ENCODE measurements at regions of chr9 and their contacts with region 1.

Region 1: DNA sequence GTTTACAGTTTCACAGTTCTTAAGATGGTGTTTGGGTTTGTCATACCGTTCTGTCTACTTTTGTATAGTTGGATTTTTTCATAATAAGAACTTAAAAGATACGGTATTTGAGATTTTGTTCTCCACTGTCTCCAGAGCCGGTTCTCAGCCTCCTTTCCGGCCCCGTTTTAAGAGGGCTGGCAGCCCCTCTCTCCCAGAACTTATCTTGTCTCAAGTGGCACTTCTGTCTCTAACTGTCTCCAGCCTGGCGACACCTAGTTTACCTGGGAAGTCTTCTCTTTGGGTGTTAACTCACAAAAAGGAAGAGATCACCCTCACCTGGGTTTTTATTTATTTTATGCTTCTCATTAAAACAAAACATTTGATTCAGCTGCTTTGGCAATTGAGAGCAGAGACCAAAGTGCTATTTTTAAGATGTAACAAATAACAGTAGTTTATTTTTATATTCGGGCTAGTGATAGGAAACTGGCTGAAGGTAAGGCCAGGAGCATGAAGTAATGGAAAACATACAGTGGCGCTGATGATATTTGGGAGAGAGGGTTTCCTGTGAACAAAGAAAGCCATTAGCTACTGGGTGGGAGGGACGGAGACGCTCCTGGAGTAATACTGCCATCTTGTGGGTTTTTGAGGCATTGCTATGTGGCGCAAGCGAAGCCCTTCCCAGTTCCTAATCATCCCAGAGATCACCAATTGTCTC is 48.3 kb downstream of the ACER2 start:
- DNase-seq: peak; percentile 32 to 84
- ATAC-seq: peak; percentile 88 to 99 (median 98)
- H3K4me3 ChIP-seq: no peak overlapping the region
- H3K4me3 Mint-ChIP-seq: no peak overlapping the region
- H3K27ac ChIP-seq: no peak overlapping the region
- H3K27ac Mint-ChIP-seq: no peak overlapping the region
- H3K4me1 ChIP-seq: peaks cover 5% of the 10 kb centered on the region
- H3K4me1 Mint-ChIP-seq: peaks cover 0 to 9% of the 10 kb centered on the region in 2 donors
- H3K27me3 ChIP-seq: no peaks in the 10 kb centered on the region
- H3K27me3 Mint-ChIP-seq: peaks cover 0 to 4% of the 10 kb centered on the region in 2 donors
- CTCF ChIP-seq: peak; percentile 98

Region 2: GRCh38 chr9:18255158-18255629 is 1202.0 kb before region 1 on chr9:
- intact Hi-C with region 1: loop called (anchors 1 kb)
- DNase-seq: peak; percentile 53 to 82
- ATAC-seq: peak; percentile 64 to 90 (median 84)
- H3K4me3 ChIP-seq: no peak overlapping the region
- H3K4me3 Mint-ChIP-seq: no peak overlapping the region
- H3K27ac ChIP-seq: no peak overlapping the region
- H3K27ac Mint-ChIP-seq: no peak overlapping the region
- H3K4me1 ChIP-seq: no peaks in the 10 kb centered on the region
- H3K4me1 Mint-ChIP-seq: no peaks in the 10 kb centered on the region
- H3K27me3 ChIP-seq: no peaks in the 10 kb centered on the region
- H3K27me3 Mint-ChIP-seq: peaks cover 0 to 3% of the 10 kb centered on the region in 2 donors
- CTCF ChIP-seq: peak; percentile 99

Region 3: GRCh38 chr9:19028835-19029451 is 428.2 kb before region 1 on chr9:
- intact Hi-C with region 1: loop called (anchors 1 kb)
- DNase-seq: peak in 1 of 2 donors; percentile 64
- ATAC-seq: peak in 2 of 3 donors; percentile 38 to 60
- H3K4me3 ChIP-seq: no peak overlapping the region
- H3K4me3 Mint-ChIP-seq: no peak overlapping the region
- H3K27ac ChIP-seq: no peak overlapping the region
- H3K27ac Mint-ChIP-seq: no peak overlapping the region
- H3K4me1 ChIP-seq: no peaks in the 10 kb centered on the region
- H3K4me1 Mint-ChIP-seq: peaks cover 0 to 4% of the 10 kb centered on the region in 2 donors
- H3K27me3 ChIP-seq: no peaks in the 10 kb centered on the region
- H3K27me3 Mint-ChIP-seq: peaks cover 11 to 20% of the 10 kb centered on the region in 2 donors
- CTCF ChIP-seq: peak; percentile 71

Region 4: DNA sequence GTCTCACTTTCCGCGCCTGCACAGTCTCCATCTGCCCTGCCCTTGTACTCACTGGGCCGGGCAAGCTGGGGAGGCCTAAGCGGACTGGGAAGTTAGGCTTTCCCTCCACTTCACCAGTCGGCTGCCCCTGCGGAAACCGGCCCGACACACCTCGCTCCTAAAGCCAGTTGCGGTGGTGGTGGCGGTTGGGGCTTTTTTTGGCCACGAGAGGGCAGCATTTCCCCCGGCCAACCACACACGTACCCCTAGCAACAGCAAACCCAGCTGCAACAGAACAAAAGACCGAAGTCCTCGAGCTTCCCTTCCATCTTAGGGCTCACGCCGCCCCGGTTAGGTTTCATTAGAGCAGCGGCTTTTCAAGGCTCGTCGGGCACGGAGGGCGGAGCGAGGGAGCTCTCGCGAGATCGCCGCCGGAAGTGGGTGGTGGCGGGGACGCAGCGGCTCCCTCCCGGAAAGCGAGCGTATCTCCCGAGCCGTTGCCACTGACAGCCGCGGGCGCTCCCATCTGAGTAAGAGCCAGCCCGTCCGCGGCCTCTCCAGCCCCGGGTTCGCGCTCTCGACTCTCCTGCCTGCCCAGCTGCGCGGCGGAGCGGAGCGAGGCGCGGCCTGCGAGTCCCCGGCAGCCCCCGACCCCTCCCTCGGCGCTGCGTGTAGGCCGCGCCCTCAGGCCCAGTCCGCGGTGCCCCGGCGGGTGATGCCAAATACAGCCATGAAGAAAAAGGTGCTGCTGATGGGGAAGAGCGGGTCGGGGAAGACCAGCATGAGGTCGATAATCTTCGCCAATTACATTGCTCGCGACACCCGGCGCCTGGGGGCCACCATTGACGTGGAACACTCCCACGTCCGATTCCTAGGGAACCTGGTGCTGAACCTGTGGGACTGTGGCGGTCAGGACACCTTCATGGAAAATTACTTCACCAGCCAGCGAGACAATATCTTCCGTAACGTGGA is 407.9 kb before region 1 on chr9 and contains the start of gene RRAGA:
- intact Hi-C with region 1: loop called (anchors 2 kb)
- DNase-seq: peak; percentile 94 to 97
- ATAC-seq: peak; percentile 92 to 96 (median 93)
- H3K4me3 ChIP-seq: peak within 1 kb of the TSS; percentile 77
- H3K4me3 Mint-ChIP-seq: peak within 1 kb of the TSS; percentile 94
- H3K27ac ChIP-seq: peak within 1 kb of the TSS; percentile 82
- H3K27ac Mint-ChIP-seq: peak within 1 kb of the TSS; percentile 95 to 96
- H3K4me1 ChIP-seq: peaks cover 20% of the 10 kb centered on the region
- H3K4me1 Mint-ChIP-seq: peaks cover 30 to 33% of the 10 kb centered on the region in 2 donors
- H3K27me3 ChIP-seq: no peaks in the 10 kb centered on the region
- H3K27me3 Mint-ChIP-seq: no peaks in the 10 kb centered on the region
- CTCF ChIP-seq: peak; percentile 69
- total RNA-seq, gene RRAGA: 39.0 to 43.9 (median 41.5) TPM

Region 5: DNA sequence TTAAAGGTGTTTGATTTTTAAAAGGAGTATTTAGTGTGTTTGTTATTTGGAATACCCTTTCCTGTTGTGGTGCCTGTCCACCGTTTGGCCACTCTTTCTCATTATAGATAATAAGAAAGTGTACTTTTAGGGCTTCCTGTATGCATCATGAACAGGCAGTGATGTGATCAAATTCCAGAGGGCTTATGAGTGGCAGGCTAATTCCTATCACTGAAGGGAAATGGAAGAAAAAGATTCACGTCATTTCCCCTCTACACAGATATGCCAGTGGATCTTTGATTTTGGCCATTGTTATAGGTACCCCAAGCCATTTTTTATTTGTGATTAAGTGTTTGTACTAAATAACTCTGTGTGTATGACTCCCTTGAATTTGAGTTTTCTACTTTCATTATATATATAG is 114.2 kb before region 1 on chr9:
- intact Hi-C with region 1: loop called (anchors 10 kb)
- DNase-seq: no peak
- ATAC-seq: no peak
- H3K4me3 ChIP-seq: no peak overlapping the region
- H3K4me3 Mint-ChIP-seq: no peak overlapping the region
- H3K27ac ChIP-seq: no peak overlapping the region
- H3K27ac Mint-ChIP-seq: no peak overlapping the region
- H3K4me1 ChIP-seq: no peaks in the 10 kb centered on the region
- H3K4me1 Mint-ChIP-seq: peaks cover 6 to 15% of the 10 kb centered on the region in 2 donors
- H3K27me3 ChIP-seq: no peaks in the 10 kb centered on the region
- H3K27me3 Mint-ChIP-seq: no peaks in the 10 kb centered on the region
- CTCF ChIP-seq: no peak

Region 6: DNA sequence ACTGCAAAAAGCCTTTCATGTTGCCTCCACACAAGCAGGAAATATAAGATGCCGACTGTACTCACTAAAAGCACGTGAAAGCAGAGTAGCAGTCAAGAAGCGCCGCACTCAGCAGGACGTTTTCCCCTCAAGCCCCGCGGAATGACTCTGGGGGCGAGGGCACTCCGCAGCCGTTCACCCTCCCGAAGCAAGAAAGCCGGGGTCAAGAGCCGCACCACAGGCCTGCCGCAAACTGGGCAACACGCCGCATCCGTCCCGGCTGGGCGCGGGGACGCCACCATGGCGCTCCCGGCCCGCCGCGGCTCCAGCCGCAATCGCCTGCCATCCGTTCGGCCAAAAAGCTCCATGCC is 77.5 kb before region 1 on chr9:
- intact Hi-C with region 1: loop called (anchors 5 kb)
- DNase-seq: peak in 1 of 2 donors; percentile 72
- ATAC-seq: peak; percentile 41 to 58 (median 50)
- H3K4me3 ChIP-seq: peak overlapping the region; percentile 72
- H3K4me3 Mint-ChIP-seq: peak overlapping the region; percentile 96
- H3K27ac ChIP-seq: peak overlapping the region; percentile 88
- H3K27ac Mint-ChIP-seq: peak overlapping the region; percentile 93 to 99
- H3K4me1 ChIP-seq: peaks cover 17% of the 10 kb centered on the region
- H3K4me1 Mint-ChIP-seq: peaks cover 36 to 46% of the 10 kb centered on the region in 2 donors
- H3K27me3 ChIP-seq: no peaks in the 10 kb centered on the region
- H3K27me3 Mint-ChIP-seq: no peaks in the 10 kb centered on the region
- CTCF ChIP-seq: no peak

Region 7: DNA sequence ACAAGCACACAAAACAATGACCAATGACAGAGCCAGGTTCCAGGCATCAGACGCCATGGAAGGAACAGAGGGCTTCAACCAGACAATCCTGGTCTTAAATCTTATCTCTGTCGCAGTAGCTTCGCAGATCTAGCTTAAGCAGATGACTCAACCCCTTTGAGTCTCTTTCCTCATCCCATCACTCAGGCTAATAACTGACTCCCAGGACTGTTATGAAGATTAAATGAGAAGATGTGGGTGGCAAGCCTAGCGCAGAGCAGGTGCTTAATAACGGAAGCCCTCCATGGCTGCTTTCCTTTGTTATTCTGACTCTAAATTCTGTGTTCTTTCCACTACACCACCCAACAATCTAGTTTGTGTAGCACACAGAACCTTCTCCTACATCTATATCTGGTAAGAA is 220.8 kb after region 1 on chr9:
- intact Hi-C with region 1: no loop called
- DNase-seq: no peak
- ATAC-seq: no peak
- H3K4me3 ChIP-seq: no peak overlapping the region
- H3K4me3 Mint-ChIP-seq: no peak overlapping the region
- H3K27ac ChIP-seq: no peak overlapping the region
- H3K27ac Mint-ChIP-seq: no peak overlapping the region
- H3K4me1 ChIP-seq: no peaks in the 10 kb centered on the region
- H3K4me1 Mint-ChIP-seq: no peaks in the 10 kb centered on the region
- H3K27me3 ChIP-seq: no peaks in the 10 kb centered on the region
- H3K27me3 Mint-ChIP-seq: no peaks in the 10 kb centered on the region
- CTCF ChIP-seq: no peak

Measured in natural killer cell (primary cell).